ENCODE measurements at regions of chr4 and their contacts with region 1.

Region 1: DNA sequence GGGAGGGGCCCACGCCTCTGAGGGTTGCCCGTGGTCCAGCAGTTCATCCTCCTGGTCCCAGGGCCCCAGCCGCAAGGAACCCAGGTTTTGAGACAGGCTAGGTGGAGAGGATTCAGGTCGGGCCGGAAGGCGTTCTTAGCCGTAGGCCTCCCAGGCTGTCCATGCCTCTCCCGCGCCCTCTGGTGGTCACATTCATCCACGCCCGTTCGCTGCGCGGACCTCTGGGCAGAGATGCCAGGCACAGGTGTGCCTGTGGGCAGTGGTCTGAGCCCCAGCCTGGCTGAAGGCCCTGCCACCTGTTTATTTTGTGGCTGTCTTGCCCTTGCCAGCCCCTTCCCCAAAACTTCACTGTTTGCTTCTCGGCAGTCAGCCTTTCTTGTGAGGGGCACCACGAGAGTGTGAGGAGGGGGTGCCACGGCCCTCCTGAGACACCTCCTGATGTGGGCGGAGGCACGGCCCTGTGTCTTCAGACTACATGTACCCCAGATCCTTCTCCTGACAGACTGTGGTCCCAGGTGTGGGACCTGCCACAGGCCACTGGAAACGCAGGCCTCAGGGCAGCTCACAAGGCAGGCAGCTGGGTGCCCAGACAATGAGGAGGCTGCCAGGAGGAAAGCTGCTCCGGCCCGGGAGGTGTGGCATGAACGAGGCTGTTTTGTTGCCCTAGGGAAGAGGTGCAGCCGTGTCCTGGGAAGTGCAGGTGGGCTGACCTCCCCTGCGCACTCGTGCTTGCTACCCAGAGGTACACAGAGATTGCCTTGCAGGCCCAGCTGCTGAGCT is 5.0 kb downstream of the UVSSA start:
- DNase-seq: peak; percentile 90
- ATAC-seq: peak in 1 of 2 donors; percentile 27

Region 2: GRCh38 chr4:1130316-1131186 is 221.5 kb before region 1 on chr4:
- intact Hi-C with region 1: loop called (anchors 1 to 5 kb)
- DNase-seq: peak; percentile 68
- ATAC-seq: peak; percentile 97 to 98

Region 3: DNA sequence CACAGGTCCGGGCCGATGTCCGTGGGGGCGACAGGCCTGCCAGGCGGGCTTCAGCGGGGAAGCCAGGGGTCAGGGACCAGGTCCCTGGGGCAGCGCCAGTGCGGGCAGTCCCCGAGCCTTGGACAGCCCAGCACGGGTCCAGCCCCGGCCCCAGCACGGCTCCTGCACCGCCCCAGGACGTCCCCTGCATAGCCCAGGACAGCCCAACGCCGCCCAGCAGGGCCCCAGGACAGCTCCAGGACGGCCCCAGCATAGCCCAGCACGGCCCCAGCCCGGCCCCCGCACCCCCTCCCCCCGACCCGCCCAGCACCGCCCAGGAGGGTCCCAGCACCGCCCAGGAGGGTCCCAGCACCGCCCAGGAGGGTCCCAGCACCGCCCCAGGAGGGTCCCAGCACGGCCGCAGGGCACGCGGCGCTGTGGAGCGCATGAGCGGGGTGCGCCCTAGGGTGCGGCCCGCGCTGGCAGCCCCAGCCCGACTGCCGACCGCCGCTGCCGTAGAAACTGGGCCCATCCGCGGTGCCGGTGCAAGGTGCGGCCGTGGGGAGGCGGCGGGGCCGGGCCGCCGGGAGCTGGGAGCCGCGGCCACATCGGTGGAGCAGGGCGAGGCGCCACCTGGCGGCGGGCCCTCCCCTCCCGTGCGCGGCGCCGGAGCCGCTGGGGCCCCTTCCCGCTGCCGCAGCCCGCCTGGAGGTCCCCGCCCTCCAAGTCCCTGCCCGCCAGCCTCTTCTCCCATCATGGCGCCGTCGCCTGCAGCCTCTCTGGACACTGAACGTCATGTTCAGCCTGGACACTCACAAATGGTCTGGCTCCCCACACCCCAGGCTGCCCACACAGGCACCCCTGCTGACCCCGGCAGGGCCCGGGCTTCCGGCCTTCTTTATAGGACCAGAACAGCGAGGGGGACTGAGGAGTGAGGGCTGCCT is 161.0 kb after region 1 on chr4:
- intact Hi-C with region 1: loop called in 1 of 2 experiments (anchors 10 kb)
- DNase-seq: peak; percentile 56
- ATAC-seq: peak; percentile 62 to 84

Region 4: GRCh38 chr4:1628892-1629698 is 277.1 kb after region 1 on chr4:
- intact Hi-C with region 1: loop called (anchors 1 to 2 kb)
- DNase-seq: peak; percentile 69
- ATAC-seq: peak; percentile 81 to 88

Region 5: DNA sequence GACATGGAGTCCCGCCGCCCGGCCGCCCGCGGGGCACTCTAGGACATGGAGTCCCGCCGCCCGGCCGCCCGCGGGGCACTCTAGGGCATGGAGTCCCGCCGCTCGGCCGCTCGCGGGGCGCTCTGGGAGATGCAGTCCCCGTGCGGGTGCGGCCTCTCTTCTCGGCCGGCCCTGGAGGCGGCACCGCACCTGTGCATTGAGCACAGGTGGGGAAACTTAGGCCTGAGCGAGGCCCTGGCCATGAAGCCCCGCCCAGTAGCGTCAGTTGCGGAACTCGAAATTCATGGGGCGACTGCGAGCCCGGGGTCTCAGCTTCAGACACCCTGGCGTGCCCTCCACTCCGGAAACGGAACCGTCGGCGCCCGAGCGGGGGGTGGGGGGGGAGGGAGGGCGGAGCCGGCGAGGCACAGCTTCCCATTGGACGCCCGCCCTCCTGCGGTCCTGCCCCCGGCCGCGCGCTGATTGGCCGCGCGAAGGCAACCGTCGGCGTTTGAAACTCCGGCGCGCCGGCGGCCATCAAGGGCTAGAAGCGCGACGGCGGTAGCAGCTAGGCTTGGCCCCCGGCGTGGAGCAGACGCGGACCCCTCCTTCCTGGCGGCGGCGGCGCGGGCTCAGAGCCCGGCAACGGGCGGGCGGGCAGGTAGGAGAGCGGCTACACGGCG is 369.1 kb after region 1 on chr4 and contains the starts of genes TACC3 and TMEM129:
- intact Hi-C with region 1: loop called (anchors 5 to 10 kb)
- DNase-seq: peak; percentile 94
- ATAC-seq: peak; percentile 90
- total RNA-seq, gene TACC3: 6.3 to 9.2 TPM
- total RNA-seq, gene TMEM129: 34.0 to 48.4 TPM

Region 6: DNA sequence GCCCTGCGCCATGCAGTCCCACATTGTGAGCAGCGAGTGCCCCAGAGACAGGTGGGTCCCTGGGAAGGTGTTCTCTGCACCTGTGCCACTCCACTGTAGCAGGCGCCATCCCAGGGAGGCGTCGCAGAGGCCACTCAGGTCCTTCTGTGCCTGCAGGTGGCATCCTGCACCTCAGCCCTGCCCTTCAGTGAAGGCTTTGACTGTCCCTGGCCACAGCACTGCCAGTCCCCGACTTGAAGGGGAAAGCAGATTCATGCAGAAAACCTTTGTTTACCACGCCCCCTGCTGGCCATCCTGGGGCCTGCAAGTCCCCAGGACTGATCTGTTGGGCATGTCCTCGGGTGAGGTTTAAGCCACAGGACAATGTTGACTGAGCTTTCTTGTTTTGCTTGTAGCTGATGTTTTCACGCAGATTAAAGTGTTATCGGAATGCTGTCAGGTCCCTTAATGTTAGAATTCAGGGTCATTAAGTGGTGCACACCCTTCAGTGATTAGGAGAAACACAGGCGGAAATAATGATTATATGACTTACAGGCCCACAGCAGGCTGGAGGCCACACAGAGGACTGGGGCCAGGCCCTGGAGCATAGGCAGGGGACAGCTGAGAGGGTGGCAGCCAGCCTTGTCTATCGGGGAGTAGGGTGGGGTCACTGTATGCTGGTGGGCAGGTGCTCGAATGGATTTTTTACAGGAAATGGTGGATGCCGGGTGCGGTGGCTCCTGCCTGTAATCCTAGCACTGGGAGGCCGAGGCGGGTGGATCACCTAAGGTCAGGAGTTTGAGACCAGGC is 374.3 kb after region 1 on chr4:
- intact Hi-C with region 1: loop called (anchors 5 to 10 kb)
- DNase-seq: peak; percentile 88
- ATAC-seq: peak; percentile 48 to 53

Measured in left cardiac atrium (tissue), 4 donors.